ENCODE measurements at regions of chr10 and their contacts with region 1.

Region 1: GRCh38 chr10:30959855-30960247 is 71.8 kb downstream of the ZNF438 start:
- DNase-seq: no peak
- ATAC-seq: no peak
- H3K4me3 ChIP-seq: no peak overlapping the region
- H3K27ac ChIP-seq: no peak overlapping the region
- H3K4me1 ChIP-seq: peaks cover 0 to 33% (median 12%) of the 10 kb centered on the region in 12 donors
- H3K27me3 ChIP-seq: no peaks in the 10 kb centered on the region
- CTCF ChIP-seq: no peak
- POLR2A ChIP-seq: no peak

Region 2: DNA sequence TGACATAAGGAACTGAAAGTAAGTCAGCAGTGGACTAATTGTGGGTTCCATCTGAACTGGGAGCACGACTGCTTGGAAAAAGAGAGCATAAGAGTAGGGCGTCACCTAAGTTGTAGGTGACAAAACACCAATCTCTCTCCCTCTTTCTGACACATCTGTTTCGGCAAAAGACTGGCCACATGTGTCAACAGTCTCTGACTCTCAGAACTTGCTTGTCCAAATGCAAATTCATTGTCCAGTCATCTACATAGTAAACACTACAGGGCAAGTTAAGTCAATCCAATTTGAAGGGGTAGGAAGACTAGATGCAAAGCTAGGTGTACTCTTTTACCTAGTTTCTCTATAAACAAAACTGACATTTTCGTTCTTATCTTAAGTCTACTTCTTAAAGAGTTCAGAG is 15.8 kb before region 1 on chr10:
- intact Hi-C with region 1: loop called in 1 of 10 experiments (anchors 1 kb)
- DNase-seq: no peak
- ATAC-seq: no peak
- H3K4me3 ChIP-seq: no peak overlapping the region
- H3K27ac ChIP-seq: peak overlapping the region in 1 of 12 donors; percentile 8
- H3K4me1 ChIP-seq: peaks cover 0 to 40% (median 15%) of the 10 kb centered on the region in 12 donors
- H3K27me3 ChIP-seq: no peaks in the 10 kb centered on the region
- CTCF ChIP-seq: no peak
- POLR2A ChIP-seq: no peak